MCF 10A (cell line): ENCODE measurements at regions of chr15 and their contacts with region 1.

Region 1: GRCh38 chr15:38252481-38253412 is at the start of gene SPRED1:
- DNase-seq: peak; percentile 56
- H3K4me3 Mint-ChIP-seq: peak within 1 kb of the TSS; percentile 83
- H3K27ac Mint-ChIP-seq: peak within 1 kb of the TSS; percentile 90
- H3K4me1 Mint-ChIP-seq: peaks cover 19% of the 10 kb centered on the region
- H3K27me3 Mint-ChIP-seq: no peaks in the 10 kb centered on the region
- CTCF ChIP-seq: no peak
- total RNA-seq, gene SPRED1: 26.4 and 28.1 TPM in 2 replicates

Region 2: DNA sequence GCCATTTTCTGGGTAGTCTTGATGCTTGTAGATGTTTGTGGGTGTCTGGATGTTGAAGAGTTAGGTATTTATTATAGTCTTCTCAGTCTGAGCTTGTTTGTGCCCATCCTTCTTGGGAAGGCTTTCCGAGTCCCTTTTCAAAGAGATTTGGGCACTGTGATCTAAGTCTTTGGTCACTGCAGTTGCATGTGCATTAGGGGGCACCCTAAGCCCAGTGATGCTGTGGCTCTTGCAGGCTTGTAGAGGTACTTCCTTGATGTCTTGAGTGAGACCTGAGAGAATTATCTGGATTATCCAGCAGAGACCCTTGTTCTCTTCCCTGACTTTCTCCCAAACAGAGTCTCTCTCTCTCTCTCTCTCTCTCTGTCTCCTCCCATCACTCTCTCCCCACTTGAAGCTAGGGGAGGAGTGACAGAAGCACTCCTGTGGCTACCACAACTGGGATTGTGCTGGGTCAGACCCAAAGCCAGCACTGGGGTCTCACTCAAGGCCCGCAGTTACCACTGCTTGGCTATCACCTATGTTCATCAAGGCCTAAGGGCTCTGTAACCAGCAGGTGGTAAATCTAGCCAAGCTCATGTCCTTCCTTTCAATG is 249.8 kb before region 1 on chr15:
- CTCF ChIA-PET with region 1: interaction called, 3 read pairs
- POLR2A ChIA-PET with region 1: interaction called, 7 read pairs
- intact Hi-C with region 1: loop called (anchors 2 kb)
- DNase-seq: peak; percentile 75
- H3K4me3 Mint-ChIP-seq: no peak overlapping the region
- H3K27ac Mint-ChIP-seq: no peak overlapping the region
- H3K4me1 Mint-ChIP-seq: peaks cover 4% of the 10 kb centered on the region
- H3K27me3 Mint-ChIP-seq: no peaks in the 10 kb centered on the region
- CTCF ChIP-seq: peak; percentile 90

Region 3: GRCh38 chr15:38187630-38188313 is 65.0 kb before region 1 on chr15:
- CTCF ChIA-PET with region 1: no interaction called
- POLR2A ChIA-PET with region 1: no interaction called
- intact Hi-C with region 1: no loop called
- DNase-seq: no peak
- H3K4me3 Mint-ChIP-seq: no peak overlapping the region
- H3K27ac Mint-ChIP-seq: no peak overlapping the region
- H3K4me1 Mint-ChIP-seq: no peaks in the 10 kb centered on the region
- H3K27me3 Mint-ChIP-seq: no peaks in the 10 kb centered on the region
- CTCF ChIP-seq: no peak

Region 4: GRCh38 chr15:38207621-38208020 is 45.1 kb before region 1 on chr15:
- CTCF ChIA-PET with region 1: interaction called, 3 read pairs
- POLR2A ChIA-PET with region 1: interaction called, 24 read pairs
- intact Hi-C with region 1: no loop called
- DNase-seq: peak; percentile 38
- H3K4me3 Mint-ChIP-seq: no peak overlapping the region
- H3K27ac Mint-ChIP-seq: no peak overlapping the region
- H3K4me1 Mint-ChIP-seq: peaks cover 8% of the 10 kb centered on the region
- H3K27me3 Mint-ChIP-seq: no peaks in the 10 kb centered on the region
- CTCF ChIP-seq: no peak

Region 5: DNA sequence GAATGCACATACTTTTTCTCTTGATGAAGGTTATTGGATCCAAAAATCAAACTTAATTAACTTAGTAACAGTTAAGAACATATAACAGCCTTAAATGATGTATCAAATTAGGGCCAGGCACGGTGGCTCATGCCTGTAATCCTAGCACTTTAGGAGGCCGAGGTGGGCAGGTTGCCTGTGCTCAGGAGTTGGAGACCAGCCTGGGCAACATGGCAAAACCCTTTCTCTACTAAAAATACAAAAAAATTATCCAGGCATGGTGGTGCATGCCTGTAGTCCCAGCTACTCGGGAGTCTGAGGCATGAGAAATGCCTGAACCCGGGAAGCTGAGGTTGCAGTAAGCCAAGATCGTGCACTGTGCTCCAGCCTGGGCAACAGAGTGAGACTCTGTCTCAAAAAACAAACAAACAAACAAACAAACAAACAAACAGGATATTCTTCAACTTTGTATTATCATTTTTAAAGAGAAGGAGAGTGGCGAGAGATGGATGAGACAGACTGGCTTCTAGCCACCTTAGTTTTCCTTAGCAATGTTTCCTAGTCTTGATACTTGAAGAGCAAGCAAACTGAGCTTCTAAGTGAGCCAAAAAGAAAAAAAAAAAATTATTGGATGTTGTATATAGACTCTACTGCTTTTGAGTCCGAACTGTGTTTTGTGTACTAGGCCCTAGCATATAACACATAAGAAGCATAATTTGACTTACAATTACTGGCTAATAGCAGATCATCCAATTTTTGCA is 13.7 kb after region 1 on chr15:
- CTCF ChIA-PET with region 1: interaction called, 16 read pairs
- POLR2A ChIA-PET with region 1: interaction called, 188 read pairs
- intact Hi-C with region 1: no loop called
- DNase-seq: peak; percentile 42
- H3K4me3 Mint-ChIP-seq: peak overlapping the region; percentile 67
- H3K27ac Mint-ChIP-seq: peak overlapping the region; percentile 73
- H3K4me1 Mint-ChIP-seq: no peaks in the 10 kb centered on the region
- H3K27me3 Mint-ChIP-seq: no peaks in the 10 kb centered on the region
- CTCF ChIP-seq: no peak

Region 6: DNA sequence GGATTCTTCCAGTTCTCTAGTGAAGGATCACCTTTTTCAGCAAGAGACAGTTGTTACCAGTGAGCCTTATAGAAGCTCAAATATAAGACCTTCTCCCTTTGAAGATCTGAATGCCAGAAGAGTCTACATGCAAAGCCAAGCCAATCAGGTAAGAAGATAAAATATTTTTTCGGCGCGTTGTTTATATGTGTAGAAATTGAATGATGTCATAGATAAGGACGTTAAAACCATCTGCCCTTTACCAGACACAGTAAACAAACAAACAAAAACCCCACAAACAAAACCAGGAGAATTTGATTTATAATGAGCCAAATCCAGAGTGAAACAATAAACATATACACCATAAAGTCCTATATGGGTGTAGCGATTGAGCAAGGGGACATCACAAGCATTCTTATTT is 87.0 kb after region 1 on chr15:
- CTCF ChIA-PET with region 1: interaction called, 6 read pairs
- POLR2A ChIA-PET with region 1: interaction called, 11 read pairs
- intact Hi-C with region 1: no loop called
- DNase-seq: no peak
- H3K4me3 Mint-ChIP-seq: no peak overlapping the region
- H3K27ac Mint-ChIP-seq: no peak overlapping the region
- H3K4me1 Mint-ChIP-seq: peaks cover 6% of the 10 kb centered on the region
- H3K27me3 Mint-ChIP-seq: no peaks in the 10 kb centered on the region
- CTCF ChIP-seq: no peak

Region 7: GRCh38 chr15:38453971-38454695 is 201.4 kb after region 1 on chr15 and contains the start of gene FAM98B:
- CTCF ChIA-PET with region 1: no interaction called
- POLR2A ChIA-PET with region 1: interaction called, 14 read pairs
- intact Hi-C with region 1: no loop called
- DNase-seq: peak; percentile 90
- H3K4me3 Mint-ChIP-seq: peak within 1 kb of the TSS; percentile 91
- H3K27ac Mint-ChIP-seq: peak within 1 kb of the TSS; percentile 97
- H3K4me1 Mint-ChIP-seq: peaks cover 20% of the 10 kb centered on the region
- H3K27me3 Mint-ChIP-seq: peaks cover 30% of the 10 kb centered on the region
- CTCF ChIP-seq: no peak
- total RNA-seq, gene FAM98B: 26.5 and 33.1 TPM in 2 replicates